ENCODE measurements at regions of chr4 and their contacts with region 1.

Region 1: DNA sequence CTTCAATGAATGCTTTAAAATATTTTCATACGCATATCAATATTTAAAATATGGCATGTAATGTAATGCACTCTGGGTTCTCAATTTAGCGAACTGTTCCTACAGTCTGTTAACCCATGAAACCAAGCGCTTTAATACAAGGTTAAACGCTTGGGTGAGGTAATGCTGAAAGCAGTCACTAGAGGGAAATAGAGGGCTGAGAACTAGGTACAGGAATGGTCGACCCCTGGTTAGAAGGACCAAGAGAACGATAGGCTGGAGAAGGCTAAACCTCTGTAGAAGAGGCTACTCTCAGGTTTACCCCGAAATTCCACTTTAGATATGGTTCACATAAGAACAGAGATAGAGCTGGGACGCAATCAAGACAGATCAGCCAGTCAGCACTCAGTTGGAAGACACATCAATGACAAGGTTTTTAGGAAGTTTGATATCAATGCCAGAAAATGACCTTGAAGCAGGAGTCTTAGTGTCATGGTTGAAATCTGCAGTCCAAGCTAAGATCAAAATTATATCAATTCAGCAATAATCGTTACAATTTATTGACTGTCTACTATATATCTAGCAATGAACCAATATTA is 26.9 kb downstream of the ARSJ start:
- DNase-seq: peak; percentile 10
- H3K4me3 Mint-ChIP-seq: no peak overlapping the region
- H3K27ac Mint-ChIP-seq: no peak overlapping the region
- H3K4me1 Mint-ChIP-seq: no peaks in the 10 kb centered on the region
- H3K27me3 Mint-ChIP-seq: peaks cover 3% of the 10 kb centered on the region

Region 2: DNA sequence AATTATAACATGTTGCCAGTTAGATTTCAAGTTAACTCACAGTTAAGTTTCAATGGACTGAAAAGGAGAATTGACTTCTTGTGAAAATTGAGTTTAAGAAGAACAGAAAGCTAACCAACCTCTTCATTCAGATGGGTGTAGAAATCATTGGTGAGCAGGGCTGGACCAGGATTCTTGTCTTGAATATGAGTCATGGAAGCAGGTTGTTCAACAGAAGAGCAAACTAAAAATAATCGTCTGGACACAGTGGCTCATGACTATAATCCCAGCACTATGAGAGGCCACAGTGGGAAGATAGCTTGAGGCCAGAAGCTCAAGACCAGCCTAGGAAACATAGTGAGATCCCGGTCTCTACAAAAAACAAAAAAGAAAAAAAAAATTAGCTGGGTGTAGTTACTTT is 71.3 kb before region 1 on chr4:
- CTCF ChIA-PET with region 1: no interaction called
- POLR2A ChIA-PET with region 1: no interaction called
- intact Hi-C with region 1: no loop called
- DNase-seq: no peak
- H3K4me3 Mint-ChIP-seq: no peak overlapping the region
- H3K27ac Mint-ChIP-seq: no peak overlapping the region
- H3K4me1 Mint-ChIP-seq: peaks cover 4% of the 10 kb centered on the region
- H3K27me3 Mint-ChIP-seq: no peaks in the 10 kb centered on the region

Region 3: DNA sequence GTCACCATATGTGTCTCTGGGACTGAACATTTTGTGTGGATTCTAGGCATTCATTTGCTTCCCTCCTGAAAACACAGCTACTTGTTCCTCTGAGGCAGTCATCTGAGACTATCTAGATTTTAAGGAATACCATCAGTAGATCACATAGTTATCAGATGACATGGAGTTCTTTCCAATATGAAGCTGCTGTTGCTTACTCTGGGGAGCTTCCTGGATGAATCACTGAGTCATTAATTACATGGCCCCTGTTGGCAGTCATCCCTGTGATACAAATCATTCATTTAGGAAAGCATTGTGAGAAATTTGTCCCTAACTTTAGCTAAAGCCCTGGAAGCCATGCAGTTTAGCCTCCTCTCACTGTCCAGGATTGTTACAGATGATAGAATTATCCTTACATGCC is 125.1 kb after region 1 on chr4:
- CTCF ChIA-PET with region 1: interaction called, 56 read pairs
- POLR2A ChIA-PET with region 1: no interaction called
- intact Hi-C with region 1: no loop called
- DNase-seq: no peak
- H3K4me3 Mint-ChIP-seq: no peak overlapping the region
- H3K27ac Mint-ChIP-seq: no peak overlapping the region
- H3K4me1 Mint-ChIP-seq: no peaks in the 10 kb centered on the region
- H3K27me3 Mint-ChIP-seq: no peaks in the 10 kb centered on the region

Region 4: DNA sequence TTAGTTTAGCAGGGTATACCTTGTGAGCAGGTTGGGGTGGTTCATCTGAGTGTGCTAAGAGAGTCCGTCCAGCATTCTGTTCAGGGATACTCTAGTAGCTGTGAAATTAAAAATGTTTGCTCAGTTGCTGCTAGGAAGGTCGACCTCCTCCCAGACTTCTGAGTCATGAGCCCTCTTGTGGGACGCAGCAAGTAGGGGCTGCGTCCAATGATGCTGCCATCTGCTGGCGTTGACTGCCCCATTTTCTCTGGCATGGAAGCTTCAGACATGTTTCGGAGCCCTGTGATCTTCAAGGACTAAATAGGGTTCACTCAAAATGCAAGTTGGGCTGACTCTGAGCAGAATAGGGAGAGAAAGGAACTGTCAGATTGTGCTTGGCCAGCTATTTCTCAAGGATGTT is 227.9 kb after region 1 on chr4:
- CTCF ChIA-PET with region 1: interaction called, 3 read pairs
- POLR2A ChIA-PET with region 1: no interaction called
- intact Hi-C with region 1: loop called (anchors 2 kb)
- DNase-seq: peak; percentile 46
- H3K4me3 Mint-ChIP-seq: no peak overlapping the region
- H3K27ac Mint-ChIP-seq: no peak overlapping the region
- H3K4me1 Mint-ChIP-seq: no peaks in the 10 kb centered on the region
- H3K27me3 Mint-ChIP-seq: no peaks in the 10 kb centered on the region

Region 5: DNA sequence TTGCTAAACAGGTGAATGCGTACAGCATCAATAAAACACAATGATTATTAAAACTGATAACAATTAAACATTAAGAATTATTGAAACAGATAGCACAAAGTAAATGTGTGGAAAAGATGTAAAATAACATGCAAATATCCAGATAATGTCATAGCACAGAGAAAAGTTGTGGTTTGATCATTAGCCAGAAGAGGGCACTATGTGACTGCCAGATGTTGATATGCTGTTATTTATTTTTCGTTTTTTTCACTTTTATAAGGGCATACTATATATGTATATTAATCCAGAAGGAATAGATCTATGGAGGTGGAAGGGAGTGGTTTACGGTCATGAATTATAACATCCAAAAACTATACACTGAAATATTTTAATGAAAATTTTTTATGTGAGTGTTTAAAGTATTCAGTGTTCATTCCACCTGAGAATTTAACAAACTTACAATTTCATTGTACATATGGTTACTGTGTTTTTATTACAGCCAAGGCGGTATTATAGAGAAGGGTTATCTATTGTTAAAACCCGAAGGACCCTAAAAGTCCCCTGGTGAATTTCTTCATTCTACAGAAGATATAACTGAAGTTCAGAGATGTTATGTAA is 434.2 kb after region 1 on chr4:
- CTCF ChIA-PET with region 1: no interaction called
- POLR2A ChIA-PET with region 1: no interaction called
- intact Hi-C with region 1: loop called (anchors 5 kb)
- DNase-seq: no peak
- H3K4me3 Mint-ChIP-seq: no peak overlapping the region
- H3K27ac Mint-ChIP-seq: no peak overlapping the region
- H3K4me1 Mint-ChIP-seq: no peaks in the 10 kb centered on the region
- H3K27me3 Mint-ChIP-seq: peaks cover 10% of the 10 kb centered on the region

Measured in activated CD4-positive, alpha-beta memory T cell treated with anti-CD3 and anti-CD28 coated beads for 36 hours (primary cell).